Heart left ventricle (tissue), 16 donors: ENCODE measurements at regions of chr13 and their contacts with region 1.

Region 1: DNA sequence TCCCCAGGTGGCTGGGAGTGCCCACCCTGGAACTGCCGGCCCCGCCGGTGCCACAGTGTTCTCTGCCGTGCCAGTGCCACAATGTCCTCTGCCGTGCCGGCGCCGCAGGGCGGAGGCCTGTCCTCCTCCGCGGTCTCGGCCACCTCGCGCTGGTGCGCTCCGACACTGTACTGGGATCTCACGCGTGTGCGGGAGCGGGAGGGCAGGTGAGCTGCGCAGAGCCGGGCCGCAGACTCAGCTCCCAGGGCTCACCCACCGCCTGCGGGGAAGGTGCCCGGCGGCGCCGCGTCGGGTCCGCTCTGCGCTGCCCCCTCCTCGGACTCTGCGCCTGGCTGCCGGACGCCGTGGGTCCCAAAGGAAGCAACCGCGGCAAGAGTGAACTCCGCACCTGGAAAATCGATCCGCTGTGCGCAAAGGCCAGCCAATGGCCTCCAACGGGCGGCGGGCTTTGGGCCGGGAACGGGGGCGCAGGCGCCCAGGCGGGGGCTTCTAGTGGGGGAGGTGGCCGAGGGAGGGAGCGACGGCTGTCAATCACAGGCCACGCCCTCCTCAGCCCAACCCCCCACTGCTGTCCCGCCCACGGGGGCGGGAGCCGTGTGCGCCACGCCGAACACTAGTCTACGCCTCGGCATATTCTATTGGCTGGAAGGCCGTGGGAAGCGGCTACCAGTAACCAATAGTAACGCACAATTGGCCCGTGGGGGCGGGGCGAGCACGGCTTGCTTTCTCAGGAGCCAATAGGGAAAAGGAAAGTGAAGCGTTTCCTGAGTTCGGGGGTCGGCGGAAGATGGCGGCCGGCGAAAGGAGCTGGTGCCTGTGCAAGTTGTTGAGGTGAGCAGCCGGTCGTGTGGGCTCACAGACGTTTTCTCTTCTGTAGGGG is at the start of gene ALG11:
- DNase-seq: peak; percentile 99 to 100 (median 100)
- ATAC-seq: peak; percentile 100
- H3K4me3 ChIP-seq: peak within 1 kb of the TSS; percentile 63 to 98 (median 91)
- H3K27ac ChIP-seq: peak within 1 kb of the TSS; percentile 64 to 90 (median 84)
- H3K4me1 ChIP-seq: peaks cover 0 to 32% (median 21%) of the 10 kb centered on the region in 12 donors
- H3K27me3 ChIP-seq: peaks cover 0 to 9% (median 0%) of the 10 kb centered on the region in 9 donors
- CTCF ChIP-seq: peak in 2 of 12 donors; percentile 5 to 16
- POLR2A ChIP-seq: peak in 1 of 2 donors; percentile 30
- total RNA-seq, gene ALG11: 11.6 to 32.9 (median 21.8) TPM

Region 2: DNA sequence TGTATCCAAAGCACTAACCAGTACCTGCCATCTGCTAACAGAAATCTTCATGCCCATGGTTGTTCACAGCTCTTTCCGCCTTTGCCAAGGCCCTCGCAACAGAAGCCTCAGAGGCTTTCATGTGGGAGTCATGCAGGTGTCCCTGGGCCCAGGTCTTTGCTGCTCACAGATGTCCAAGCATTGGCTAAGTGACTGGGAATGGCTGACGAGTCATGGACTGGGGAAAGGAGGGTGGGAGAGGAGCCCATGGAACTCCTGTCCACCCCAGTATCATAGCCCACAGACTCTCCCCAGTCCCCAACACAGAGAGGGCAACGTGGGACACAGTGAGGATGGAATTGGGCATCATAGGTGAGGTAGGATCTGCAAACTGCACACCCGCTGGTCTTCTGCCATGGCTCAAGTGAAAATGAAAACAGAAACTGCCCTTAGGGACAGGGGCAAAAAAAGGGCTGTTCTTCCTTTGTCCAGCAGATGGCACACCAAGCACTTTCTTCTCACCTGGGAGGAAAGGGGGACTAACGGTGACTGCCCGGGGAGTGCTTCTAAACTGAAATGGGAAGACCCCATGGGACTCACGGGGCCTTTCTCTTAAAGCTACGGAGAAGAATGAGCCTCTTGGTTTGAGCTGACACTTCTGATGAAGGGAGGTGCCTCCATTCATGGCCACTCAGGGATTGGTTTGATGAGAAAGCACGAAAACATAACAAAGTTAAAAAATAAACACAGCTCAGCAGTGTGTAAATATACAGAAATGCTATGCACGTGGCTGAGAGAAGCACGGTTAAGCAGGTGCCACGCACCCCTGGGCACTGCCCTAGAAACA is 196.8 kb before region 1 on chr13:
- intact Hi-C with region 1: loop called in 3 of 10 experiments (anchors 5 to 10 kb)
- DNase-seq: peak; percentile 45 to 63 (median 60)
- ATAC-seq: peak; percentile 13 to 69 (median 60)
- H3K4me3 ChIP-seq: peak overlapping the region in 9 of 12 donors; percentile 8 to 39 (median 19)
- H3K27ac ChIP-seq: peak overlapping the region in 4 of 12 donors; percentile 17 to 42 (median 22)
- H3K4me1 ChIP-seq: peaks cover 0 to 40% (median 13%) of the 10 kb centered on the region in 12 donors
- H3K27me3 ChIP-seq: no peaks in the 10 kb centered on the region
- CTCF ChIP-seq: peak; percentile 68 to 88 (median 82)
- POLR2A ChIP-seq: no peak

Region 3: GRCh38 chr13:51935326-51936201 is 76.3 kb before region 1 on chr13:
- intact Hi-C with region 1: loop called in 1 of 10 experiments (anchors 10 kb)
- DNase-seq: no peak
- ATAC-seq: peak in 2 of 4 donors; percentile 36 to 56
- H3K4me3 ChIP-seq: no peak overlapping the region
- H3K27ac ChIP-seq: no peak overlapping the region
- H3K4me1 ChIP-seq: no peaks in the 10 kb centered on the region
- H3K27me3 ChIP-seq: no peaks in the 10 kb centered on the region
- CTCF ChIP-seq: peak in 11 of 12 donors; percentile 13 to 58 (median 30)
- POLR2A ChIP-seq: no peak

Region 4: GRCh38 chr13:51967482-51968446 is 44.1 kb before region 1 on chr13:
- intact Hi-C with region 1: loop called in 1 of 10 experiments (anchors 1 kb)
- DNase-seq: no peak
- ATAC-seq: peak; percentile 72 to 90 (median 76)
- H3K4me3 ChIP-seq: no peak overlapping the region
- H3K27ac ChIP-seq: peak overlapping the region; percentile 3 to 89 (median 73)
- H3K4me1 ChIP-seq: peaks cover 0 to 30% (median 5%) of the 10 kb centered on the region in 12 donors
- H3K27me3 ChIP-seq: no peaks in the 10 kb centered on the region
- CTCF ChIP-seq: no peak
- POLR2A ChIP-seq: no peak

Region 5: DNA sequence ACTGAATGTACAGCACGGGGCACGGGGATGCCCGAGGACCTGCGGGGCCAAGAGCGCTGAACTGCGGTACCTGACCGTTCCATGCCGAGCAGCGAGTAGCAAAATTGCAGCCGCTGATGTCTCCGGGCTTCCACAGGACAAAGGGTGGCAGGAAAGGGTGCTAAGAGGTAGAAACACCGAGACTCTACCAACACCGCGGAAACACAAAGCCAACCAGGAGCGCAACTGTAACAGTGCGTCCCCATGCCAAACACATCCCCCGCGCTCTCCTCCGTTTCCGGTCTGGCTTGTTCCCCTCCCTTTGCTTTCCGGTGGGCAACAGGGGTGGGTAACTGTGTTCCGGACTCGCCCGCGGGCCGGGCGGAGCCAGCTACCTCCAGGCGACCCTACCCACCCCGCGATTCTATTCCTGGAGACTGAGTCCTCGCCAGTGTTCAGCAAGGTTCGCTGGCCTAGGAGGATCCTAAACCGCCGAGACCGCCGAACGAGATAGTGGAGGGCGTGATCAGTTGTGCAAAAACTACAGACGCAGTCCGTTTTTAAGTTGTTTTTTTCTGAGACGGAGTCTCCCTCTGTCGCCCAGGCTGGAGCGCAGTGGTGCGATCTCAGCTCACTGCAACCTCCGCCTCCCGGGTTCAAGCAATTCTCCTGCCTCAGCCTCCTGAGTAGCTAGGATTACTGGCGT is 182.5 kb after region 1 on chr13:
- intact Hi-C with region 1: loop called in 2 of 10 experiments (anchors 5 to 10 kb)
- DNase-seq: peak; percentile 85 to 92 (median 87)
- ATAC-seq: peak; percentile 91 to 95 (median 94)
- H3K4me3 ChIP-seq: peak overlapping the region; percentile 50 to 98 (median 82)
- H3K27ac ChIP-seq: peak overlapping the region; percentile 63 to 90 (median 84)
- H3K4me1 ChIP-seq: peaks cover 0 to 29% (median 18%) of the 10 kb centered on the region in 12 donors
- H3K27me3 ChIP-seq: no peaks in the 10 kb centered on the region
- CTCF ChIP-seq: peak in 2 of 12 donors; percentile 25 to 32
- POLR2A ChIP-seq: peak in 1 of 2 donors; percentile 46